ENCODE measurements at regions of chr11 and their contacts with region 1.

Region 1: GRCh38 chr11:18588297-18589252 is at the start of gene UEVLD:
- DNase-seq: peak; percentile 33 to 94
- H3K4me3 ChIP-seq: peak within 1 kb of the TSS; percentile 69 to 97
- H3K27ac ChIP-seq: peak within 1 kb of the TSS; percentile 75 to 90
- H3K4me1 ChIP-seq: peaks cover 8 to 21% of the 10 kb centered on the region in 2 donors
- H3K27me3 ChIP-seq: no peaks in the 10 kb centered on the region
- CTCF ChIP-seq: no peak
- total RNA-seq, gene UEVLD: 10.1 TPM

Region 2: GRCh38 chr11:18310800-18311340 is 277.7 kb before region 1 on chr11:
- intact Hi-C with region 1: loop called (anchors 5 kb)
- DNase-seq: no peak
- H3K4me3 ChIP-seq: no peak overlapping the region
- H3K27ac ChIP-seq: peak overlapping the region; percentile 86 to 90
- H3K4me1 ChIP-seq: peaks cover 13 to 40% of the 10 kb centered on the region in 2 donors
- H3K27me3 ChIP-seq: no peaks in the 10 kb centered on the region
- CTCF ChIP-seq: no peak

Region 3: DNA sequence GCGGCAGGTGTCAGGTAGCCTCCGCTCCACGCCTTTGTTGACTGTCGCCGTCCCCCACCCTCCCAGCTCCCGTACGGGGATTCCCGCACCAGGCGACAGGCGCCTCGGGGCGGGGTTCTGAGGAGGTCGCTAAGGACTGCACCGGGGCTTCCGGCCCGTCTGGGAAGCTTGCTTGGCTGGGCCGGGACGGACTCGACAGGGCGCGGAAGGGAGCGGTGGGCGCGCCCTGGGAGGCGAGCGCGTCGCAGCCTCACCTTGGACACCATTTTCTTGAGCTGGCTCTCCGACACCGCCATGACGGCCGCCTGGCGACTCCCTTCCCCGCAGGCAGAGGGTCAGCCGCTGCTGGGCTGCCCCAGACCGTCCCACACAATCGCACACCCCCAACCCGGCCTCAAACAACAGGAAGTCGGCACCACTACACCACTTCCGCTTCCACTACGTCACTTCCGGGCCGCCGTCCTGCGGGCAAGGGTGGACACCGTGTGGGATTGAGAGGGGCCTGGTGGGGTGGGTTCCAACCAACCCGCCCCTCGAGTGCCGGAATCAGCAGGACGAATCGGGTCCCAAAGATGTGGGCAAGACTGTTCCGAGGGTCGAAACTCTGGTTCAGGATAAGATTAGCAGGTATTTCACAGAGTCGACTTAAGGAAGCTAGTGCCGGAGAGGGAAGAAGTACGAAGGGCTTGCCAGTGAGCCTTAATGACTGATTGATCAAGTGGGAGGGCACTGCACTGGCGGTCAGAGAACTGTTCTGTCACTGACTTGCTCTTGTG is 61.9 kb before region 1 on chr11 and contains the start of gene TSG101:
- intact Hi-C with region 1: loop called (anchors 1 kb)
- DNase-seq: peak; percentile 60 to 96
- H3K4me3 ChIP-seq: peak within 1 kb of the TSS; percentile 79 to 93
- H3K27ac ChIP-seq: peak within 1 kb of the TSS; percentile 90 to 94
- H3K4me1 ChIP-seq: peaks cover 0 to 7% of the 10 kb centered on the region in 2 donors
- H3K27me3 ChIP-seq: no peaks in the 10 kb centered on the region
- CTCF ChIP-seq: no peak
- total RNA-seq, gene TSG101: 20.3 TPM

Region 4: DNA sequence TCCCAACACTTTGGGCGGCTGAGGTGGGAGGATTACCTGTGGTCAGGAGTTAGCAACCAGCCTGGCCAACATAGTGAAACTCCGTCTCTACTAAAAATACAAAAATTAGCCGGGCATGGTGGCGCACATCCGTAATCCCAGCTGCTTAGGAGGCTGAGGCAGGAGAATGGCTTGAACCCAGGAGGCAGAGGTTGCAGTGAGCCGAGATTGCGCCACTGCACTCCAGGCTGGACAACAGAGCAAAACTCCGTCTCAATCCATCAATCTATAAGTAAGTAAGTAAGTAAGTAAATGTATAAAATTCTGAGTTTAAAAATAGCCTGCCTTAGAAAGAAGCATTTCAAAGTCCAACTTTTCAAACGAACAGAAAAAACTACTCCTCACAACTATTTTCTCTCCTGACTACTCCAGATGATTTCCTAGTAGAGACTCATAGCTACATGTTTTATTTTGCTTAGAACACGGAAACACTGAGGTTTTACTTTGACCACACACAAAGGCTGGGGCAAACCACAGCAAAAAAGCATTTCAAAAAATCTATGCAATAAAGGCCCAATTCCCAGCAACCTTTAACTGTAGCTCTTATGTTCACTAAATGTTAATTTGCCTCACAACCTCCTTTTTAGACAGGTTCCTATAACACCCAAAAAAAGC is 29.2 kb after region 1 on chr11:
- intact Hi-C with region 1: loop called (anchors 2 kb)
- DNase-seq: no peak
- H3K4me3 ChIP-seq: peak overlapping the region in 1 of 2 donors; percentile 43
- H3K27ac ChIP-seq: peak overlapping the region; percentile 71 to 76
- H3K4me1 ChIP-seq: peaks cover 4 to 12% of the 10 kb centered on the region in 2 donors
- H3K27me3 ChIP-seq: no peaks in the 10 kb centered on the region
- CTCF ChIP-seq: no peak

Region 5: DNA sequence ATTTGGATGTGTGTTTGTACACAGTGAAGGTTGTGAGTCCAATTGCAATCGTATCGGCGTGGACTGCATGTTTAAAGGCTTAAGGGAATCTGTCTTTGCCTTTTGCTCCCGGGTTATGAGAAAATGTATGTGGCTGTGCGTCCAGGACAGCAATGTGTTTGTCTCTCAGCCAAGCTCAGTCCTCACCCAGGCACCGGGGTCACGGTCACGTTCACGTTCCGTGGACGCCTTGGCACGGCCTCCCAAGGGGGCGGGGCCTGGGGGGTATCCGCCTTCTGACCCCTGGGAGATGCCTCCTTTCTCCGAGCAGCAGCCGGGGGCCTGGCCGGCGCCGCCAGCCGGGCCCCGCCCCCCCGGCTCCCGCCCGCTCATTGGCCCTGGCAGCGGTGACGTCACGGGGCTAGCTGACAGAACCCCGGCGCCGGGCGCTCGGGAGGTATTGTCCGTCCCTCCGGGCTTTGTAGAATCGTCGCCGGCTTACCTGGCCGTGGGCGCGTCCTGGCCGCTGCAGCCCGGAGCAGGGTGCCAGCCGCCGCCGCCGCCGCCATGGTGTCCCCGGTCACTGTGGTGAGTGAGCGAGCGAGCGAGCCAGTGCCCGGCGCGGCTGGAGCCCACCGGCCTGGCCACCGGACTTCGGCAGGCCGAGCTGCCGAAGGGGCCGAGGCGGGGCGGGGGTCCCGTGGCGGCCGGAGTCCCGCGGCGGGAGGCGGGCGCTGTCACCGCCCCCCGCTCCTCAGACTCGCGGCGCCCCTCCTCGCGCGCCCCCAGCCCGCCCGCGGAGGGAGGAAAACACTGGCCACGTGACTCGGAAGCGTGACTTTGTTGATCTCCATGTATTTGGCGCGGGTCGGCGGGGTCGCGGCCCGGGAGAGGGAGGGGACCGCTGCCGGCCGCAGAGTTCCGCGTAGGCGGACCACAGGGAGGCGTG is 110.0 kb after region 1 on chr11 and contains the start of gene TMEM86A:
- intact Hi-C with region 1: loop called (anchors 1 kb)
- DNase-seq: peak; percentile 88 to 98
- H3K4me3 ChIP-seq: peak within 1 kb of the TSS; percentile 96 to 99
- H3K27ac ChIP-seq: peak within 1 kb of the TSS; percentile 73 to 84
- H3K4me1 ChIP-seq: peaks cover 0 to 5% of the 10 kb centered on the region in 2 donors
- H3K27me3 ChIP-seq: no peaks in the 10 kb centered on the region
- CTCF ChIP-seq: no peak
- total RNA-seq, gene TMEM86A: 4.8 TPM

Region 6: GRCh38 chr11:18721561-18722292 is 133.2 kb after region 1 on chr11:
- intact Hi-C with region 1: loop called (anchors 2 kb)
- DNase-seq: no peak
- H3K4me3 ChIP-seq: peak overlapping the region; percentile 61 to 72
- H3K27ac ChIP-seq: peak overlapping the region; percentile 75 to 81
- H3K4me1 ChIP-seq: peaks cover 3 to 4% of the 10 kb centered on the region in 2 donors
- H3K27me3 ChIP-seq: no peaks in the 10 kb centered on the region
- CTCF ChIP-seq: peak; percentile 56 to 83 (median 69)

Measured in ascending aorta (tissue), 2 donors.